CD4-positive, alpha-beta T cell (primary cell): ENCODE measurements at regions of chr10 and their contacts with region 1.

Region 1: GRCh38 chr10:116765547-116766162 is 23.3 kb upstream of the HSPA12A start:
- DNase-seq: peak in 8 of 14 experiments; percentile 17 to 65 (median 38)
- ATAC-seq: no peak
- H3K4me3 ChIP-seq: no peak overlapping the region
- H3K4me3 Mint-ChIP-seq: no peak overlapping the region
- H3K27ac ChIP-seq: no peak overlapping the region
- H3K27ac Mint-ChIP-seq: no peak overlapping the region
- H3K4me1 ChIP-seq: no peaks in the 10 kb centered on the region
- H3K4me1 Mint-ChIP-seq: no peaks in the 10 kb centered on the region
- H3K27me3 ChIP-seq: peaks cover 15 to 30% of the 10 kb centered on the region in 2 experiments
- H3K27me3 Mint-ChIP-seq: peaks cover 89% of the 10 kb centered on the region
- CTCF ChIP-seq: no peak

Region 2: DNA sequence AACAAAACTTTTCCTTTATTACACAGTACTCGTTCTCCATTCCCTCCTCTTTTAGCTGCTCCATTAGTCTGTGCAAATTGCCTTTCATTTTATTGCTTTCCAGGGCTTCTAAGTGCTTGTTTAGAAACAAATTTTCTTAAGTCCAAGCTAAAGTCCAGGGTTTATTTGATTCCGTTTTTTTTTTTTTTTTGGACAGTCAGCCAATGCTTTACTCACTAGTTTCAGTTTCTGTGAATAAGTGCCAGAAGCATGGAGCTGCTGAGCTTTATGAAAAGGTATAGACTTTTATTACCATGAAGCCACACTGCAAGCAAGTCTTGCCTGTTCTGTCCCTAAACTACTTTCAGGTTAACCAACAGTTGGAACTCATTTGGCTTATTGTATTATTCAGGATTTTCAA is 947.6 kb before region 1 on chr10:
- CTCF ChIA-PET with region 1: no interaction called
- POLR2A ChIA-PET with region 1: no interaction called
- intact Hi-C with region 1: no loop called
- DNase-seq: no peak
- ATAC-seq: no peak
- H3K4me3 ChIP-seq: no peak overlapping the region
- H3K4me3 Mint-ChIP-seq: no peak overlapping the region
- H3K27ac ChIP-seq: no peak overlapping the region
- H3K27ac Mint-ChIP-seq: no peak overlapping the region
- H3K4me1 ChIP-seq: no peaks in the 10 kb centered on the region
- H3K4me1 Mint-ChIP-seq: no peaks in the 10 kb centered on the region
- H3K27me3 ChIP-seq: no peaks in the 10 kb centered on the region
- H3K27me3 Mint-ChIP-seq: no peaks in the 10 kb centered on the region
- CTCF ChIP-seq: no peak

Region 3: DNA sequence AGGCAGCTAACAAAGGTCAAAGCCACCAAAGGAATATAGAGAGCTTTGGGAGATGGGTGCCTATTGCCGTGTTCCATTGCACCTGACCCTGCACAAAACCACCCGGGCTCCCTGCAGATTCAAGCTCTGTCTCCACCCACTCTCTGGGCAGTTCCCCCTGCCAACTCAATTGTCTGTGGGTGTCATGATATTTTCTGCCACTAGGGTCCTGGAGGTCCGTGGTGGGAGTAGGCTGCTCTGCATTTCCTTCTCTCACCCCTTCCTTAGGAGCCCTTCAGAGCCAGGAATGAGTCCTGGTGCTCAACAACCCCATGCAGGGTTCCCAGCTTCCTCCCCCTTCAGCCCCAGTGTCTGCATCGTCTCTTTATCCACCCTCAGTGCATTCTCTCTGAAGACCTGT is 110.8 kb before region 1 on chr10:
- CTCF ChIA-PET with region 1: no interaction called
- POLR2A ChIA-PET with region 1: no interaction called
- intact Hi-C with region 1: no loop called
- DNase-seq: peak in 1 of 14 experiments; percentile 3
- ATAC-seq: no peak
- H3K4me3 ChIP-seq: no peak overlapping the region
- H3K4me3 Mint-ChIP-seq: no peak overlapping the region
- H3K27ac ChIP-seq: no peak overlapping the region
- H3K27ac Mint-ChIP-seq: no peak overlapping the region
- H3K4me1 ChIP-seq: no peaks in the 10 kb centered on the region
- H3K4me1 Mint-ChIP-seq: no peaks in the 10 kb centered on the region
- H3K27me3 ChIP-seq: peaks cover 8 to 16% of the 10 kb centered on the region in 2 experiments
- H3K27me3 Mint-ChIP-seq: peaks cover 55% of the 10 kb centered on the region
- CTCF ChIP-seq: no peak

Region 4: DNA sequence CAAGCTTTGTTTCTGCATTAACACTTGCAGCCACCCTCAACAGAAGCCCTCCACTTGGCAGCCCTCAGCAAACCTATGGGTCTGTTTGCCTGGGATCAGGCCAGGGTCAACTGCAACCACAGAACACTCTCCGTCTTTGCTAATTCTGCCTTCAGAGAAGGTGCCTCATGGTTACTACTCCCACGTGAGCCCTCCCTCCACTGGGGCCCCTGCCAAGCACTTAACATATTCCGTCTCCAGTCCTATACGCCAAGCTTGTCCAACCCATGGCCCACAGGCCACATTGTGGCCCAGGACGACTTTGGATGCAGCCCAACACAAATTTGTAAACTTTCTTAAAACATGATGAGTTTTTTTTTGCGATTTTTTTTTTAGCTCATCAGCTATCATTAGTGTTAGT is 78.0 kb before region 1 on chr10:
- CTCF ChIA-PET with region 1: no interaction called
- POLR2A ChIA-PET with region 1: no interaction called
- intact Hi-C with region 1: loop called (anchors 5 kb)
- DNase-seq: no peak
- ATAC-seq: no peak
- H3K4me3 ChIP-seq: no peak overlapping the region
- H3K4me3 Mint-ChIP-seq: no peak overlapping the region
- H3K27ac ChIP-seq: no peak overlapping the region
- H3K27ac Mint-ChIP-seq: no peak overlapping the region
- H3K4me1 ChIP-seq: no peaks in the 10 kb centered on the region
- H3K4me1 Mint-ChIP-seq: no peaks in the 10 kb centered on the region
- H3K27me3 ChIP-seq: peaks cover 10 to 20% of the 10 kb centered on the region in 2 experiments
- H3K27me3 Mint-ChIP-seq: peaks cover 66% of the 10 kb centered on the region
- CTCF ChIP-seq: no peak

Region 5: DNA sequence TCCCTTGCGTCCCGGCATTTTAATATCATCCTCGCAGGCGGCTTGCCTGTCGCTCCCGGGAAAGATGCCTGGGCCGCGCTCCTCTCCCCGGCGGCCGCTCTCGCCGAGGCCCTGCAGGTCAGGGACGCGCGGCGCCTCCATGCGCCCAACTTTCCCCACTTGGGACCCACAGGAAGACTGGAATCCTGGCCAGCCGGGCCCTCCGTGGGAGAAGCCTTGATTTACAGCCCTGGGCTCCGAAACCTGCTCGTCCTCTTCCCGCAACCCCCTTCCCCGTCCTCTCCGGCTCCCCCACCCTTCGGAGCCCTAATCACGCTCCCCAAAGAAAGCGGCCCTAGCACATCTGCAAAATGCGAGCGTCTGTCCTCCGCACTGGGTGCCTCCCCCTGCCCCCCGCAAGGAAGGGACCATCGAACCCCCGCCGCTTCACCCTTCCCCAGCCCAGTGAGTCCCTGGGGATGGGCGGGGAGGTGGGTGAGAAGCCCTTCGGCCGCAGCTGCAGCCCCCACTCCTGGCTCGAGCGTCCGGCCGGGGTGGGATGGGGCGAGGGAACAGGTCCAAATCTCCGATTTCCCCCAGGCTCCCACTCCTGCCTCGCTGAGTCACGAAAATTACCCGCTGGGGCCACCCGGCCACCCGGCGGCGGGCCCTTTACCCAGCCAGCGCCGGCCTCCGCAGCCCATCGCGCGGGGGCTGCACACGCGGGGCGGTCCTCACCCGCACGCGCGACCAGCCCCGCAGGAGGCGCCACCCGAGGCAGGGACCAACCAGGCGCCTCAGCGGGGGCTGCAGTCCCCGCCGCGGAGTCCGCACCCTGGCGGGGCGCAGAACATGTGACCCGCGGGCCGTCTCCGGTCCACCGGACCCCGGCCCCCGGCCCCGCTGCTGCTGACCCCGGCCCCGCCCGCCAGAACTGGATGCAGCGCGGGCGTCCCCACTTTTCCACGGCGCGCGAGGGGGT is 24.0 kb before region 1 on chr10:
- CTCF ChIA-PET with region 1: no interaction called
- POLR2A ChIA-PET with region 1: no interaction called
- intact Hi-C with region 1: no loop called
- DNase-seq: peak in 1 of 14 experiments; percentile 22
- ATAC-seq: no peak
- H3K4me3 ChIP-seq: peak overlapping the region; percentile 26
- H3K4me3 Mint-ChIP-seq: peak overlapping the region; percentile 60
- H3K27ac ChIP-seq: no peak overlapping the region
- H3K27ac Mint-ChIP-seq: no peak overlapping the region
- H3K4me1 ChIP-seq: peaks cover 17% of the 10 kb centered on the region
- H3K4me1 Mint-ChIP-seq: peaks cover 5% of the 10 kb centered on the region
- H3K27me3 ChIP-seq: peaks cover 51 to 88% of the 10 kb centered on the region in 2 experiments
- H3K27me3 Mint-ChIP-seq: peaks cover 81% of the 10 kb centered on the region
- CTCF ChIP-seq: no peak